CD8-positive, alpha-beta T cell (primary cell): ENCODE measurements at regions of chr1 and their contacts with region 1.

Region 1: DNA sequence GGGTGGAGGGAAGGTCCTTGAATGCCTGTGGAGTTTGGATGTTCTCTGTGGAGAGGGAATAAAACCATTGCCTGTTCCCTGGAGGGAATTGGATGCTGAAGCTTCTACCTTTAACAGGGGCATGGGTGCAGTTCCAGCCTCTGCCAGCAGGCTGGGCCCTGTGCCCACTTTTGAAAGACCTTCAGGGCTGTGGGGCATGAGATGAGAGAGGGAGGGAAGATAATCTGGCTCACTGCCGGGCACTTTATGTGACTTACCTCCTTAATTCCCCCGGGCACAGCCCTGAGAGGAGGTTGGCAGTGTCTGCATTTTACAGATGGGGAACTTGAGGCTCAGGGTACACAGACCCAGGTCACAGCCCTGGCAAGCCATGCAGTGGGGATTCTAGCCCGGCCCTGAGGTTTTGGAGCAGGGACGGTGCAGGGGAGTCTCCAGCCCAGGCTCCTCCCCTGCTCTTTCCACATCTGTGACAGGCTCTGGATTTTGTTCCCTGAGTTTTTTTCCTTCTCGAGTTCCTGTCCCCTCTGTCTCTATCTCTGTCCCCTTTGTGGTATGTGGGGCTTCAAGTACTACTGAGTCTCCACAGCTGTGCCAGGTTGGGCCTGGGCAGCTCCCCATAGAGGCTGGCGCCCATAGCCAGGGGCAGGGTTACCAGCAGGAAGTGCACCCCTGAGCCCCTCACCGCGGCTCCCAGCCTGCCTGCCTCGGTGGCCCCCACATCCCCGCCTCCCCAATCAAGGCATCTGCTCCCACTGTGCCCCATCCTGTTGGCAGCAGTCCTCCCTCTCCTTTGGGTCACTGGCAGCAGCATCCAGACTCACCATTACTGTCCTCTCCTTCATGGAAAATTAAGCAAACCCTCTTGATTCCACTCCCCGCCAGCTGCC is 14.0 kb upstream of the THEMIS2 start:
- DNase-seq: peak; percentile 71 to 91 (median 85)
- ATAC-seq: peak; percentile 100
- H3K4me3 ChIP-seq: no peak overlapping the region
- H3K4me3 Mint-ChIP-seq: no peak overlapping the region
- H3K27ac ChIP-seq: no peak overlapping the region
- H3K27ac Mint-ChIP-seq: no peak overlapping the region
- H3K4me1 ChIP-seq: peaks cover 11% of the 10 kb centered on the region
- H3K4me1 Mint-ChIP-seq: peaks cover 17% of the 10 kb centered on the region
- H3K27me3 ChIP-seq: no peaks in the 10 kb centered on the region
- H3K27me3 Mint-ChIP-seq: no peaks in the 10 kb centered on the region
- CTCF ChIP-seq: peak; percentile 100

Region 2: DNA sequence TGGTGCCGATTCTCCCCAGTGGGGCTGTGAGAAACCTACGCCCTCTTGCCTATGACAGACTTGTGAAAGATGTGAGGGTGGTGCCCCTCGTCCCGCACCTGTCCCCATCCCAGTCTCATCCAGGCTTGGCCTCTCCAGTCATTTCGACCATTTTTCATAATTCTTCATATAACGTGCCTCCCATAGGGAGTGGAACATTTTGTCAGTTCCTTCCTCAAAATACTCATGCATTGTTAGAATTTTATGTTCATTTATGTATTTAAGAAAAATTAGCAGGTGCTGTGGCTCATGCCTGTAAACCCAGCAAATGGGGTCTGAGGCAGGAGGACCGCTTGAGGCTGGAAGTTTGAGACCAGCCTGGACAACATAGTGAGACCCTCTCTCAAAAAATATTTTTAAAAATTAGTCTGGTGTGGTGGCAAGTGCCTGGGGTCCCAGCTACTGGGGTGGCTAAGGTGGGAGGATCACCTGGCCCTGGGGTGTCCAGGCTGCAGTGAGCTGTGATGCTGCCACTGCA is 56.8 kb after region 1 on chr1:
- CTCF ChIA-PET with region 1: interaction called, 16 read pairs
- POLR2A ChIA-PET with region 1: no interaction called
- intact Hi-C with region 1: no loop called
- DNase-seq: no peak
- ATAC-seq: no peak
- H3K4me3 ChIP-seq: peak overlapping the region; percentile 1 to 90
- H3K4me3 Mint-ChIP-seq: peak overlapping the region; percentile 94
- H3K27ac ChIP-seq: peak overlapping the region; percentile 81 to 92
- H3K27ac Mint-ChIP-seq: peak overlapping the region; percentile 96
- H3K4me1 ChIP-seq: peaks cover 4% of the 10 kb centered on the region
- H3K4me1 Mint-ChIP-seq: peaks cover 21% of the 10 kb centered on the region
- H3K27me3 ChIP-seq: no peaks in the 10 kb centered on the region
- H3K27me3 Mint-ChIP-seq: no peaks in the 10 kb centered on the region
- CTCF ChIP-seq: no peak

Region 3: GRCh38 chr1:27973771-27974416 is 115.6 kb after region 1 on chr1:
- CTCF ChIA-PET with region 1: interaction called, 65 read pairs
- POLR2A ChIA-PET with region 1: no interaction called
- intact Hi-C with region 1: loop called (anchors 1 to 2 kb)
- DNase-seq: no peak
- ATAC-seq: no peak
- H3K4me3 ChIP-seq: no peak overlapping the region
- H3K4me3 Mint-ChIP-seq: no peak overlapping the region
- H3K27ac ChIP-seq: no peak overlapping the region
- H3K27ac Mint-ChIP-seq: peak overlapping the region; percentile 17
- H3K4me1 ChIP-seq: no peaks in the 10 kb centered on the region
- H3K4me1 Mint-ChIP-seq: peaks cover 6% of the 10 kb centered on the region
- H3K27me3 ChIP-seq: no peaks in the 10 kb centered on the region
- H3K27me3 Mint-ChIP-seq: no peaks in the 10 kb centered on the region
- CTCF ChIP-seq: no peak

Region 4: DNA sequence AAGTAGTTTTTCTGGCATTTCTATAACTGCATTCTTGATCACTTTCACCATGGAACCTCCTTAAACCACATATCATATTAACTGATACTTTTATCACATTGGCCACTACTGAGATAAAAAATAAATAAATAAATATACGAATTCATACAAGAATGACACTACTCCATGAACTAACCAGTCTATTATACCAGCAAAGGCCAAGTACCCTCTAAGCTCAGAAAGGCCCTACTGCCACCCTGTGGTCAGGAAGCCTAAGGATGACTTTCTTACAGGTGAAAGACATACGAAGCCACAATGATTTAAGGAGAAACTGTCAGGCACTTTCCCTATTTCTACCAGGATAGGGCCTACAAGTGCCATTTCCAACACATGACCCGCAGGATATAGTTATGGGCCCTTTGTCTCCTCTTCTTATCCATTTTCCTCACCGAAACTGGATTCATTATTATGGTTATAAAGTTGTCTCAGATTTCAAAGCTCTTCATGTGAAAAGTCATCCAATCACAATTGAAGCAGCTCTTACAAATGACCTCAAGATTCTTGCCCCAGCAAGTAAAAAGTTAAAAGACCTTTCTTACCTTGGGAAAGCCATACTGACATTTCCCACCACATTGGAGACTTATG is 350.6 kb after region 1 on chr1:
- CTCF ChIA-PET with region 1: interaction called, 4 read pairs
- POLR2A ChIA-PET with region 1: no interaction called
- intact Hi-C with region 1: loop called (anchors 1 to 2 kb)
- DNase-seq: peak; percentile 19 to 81 (median 62)
- ATAC-seq: peak; percentile 95
- H3K4me3 ChIP-seq: no peak overlapping the region
- H3K4me3 Mint-ChIP-seq: no peak overlapping the region
- H3K27ac ChIP-seq: no peak overlapping the region
- H3K27ac Mint-ChIP-seq: no peak overlapping the region
- H3K4me1 ChIP-seq: no peaks in the 10 kb centered on the region
- H3K4me1 Mint-ChIP-seq: peaks cover 8% of the 10 kb centered on the region
- H3K27me3 ChIP-seq: no peaks in the 10 kb centered on the region
- H3K27me3 Mint-ChIP-seq: no peaks in the 10 kb centered on the region
- CTCF ChIP-seq: peak; percentile 69

Region 5: GRCh38 chr1:28735959-28736449 is 877.7 kb after region 1 on chr1:
- CTCF ChIA-PET with region 1: no interaction called
- POLR2A ChIA-PET with region 1: no interaction called
- intact Hi-C with region 1: no loop called
- DNase-seq: no peak
- ATAC-seq: no peak
- H3K4me3 ChIP-seq: peak overlapping the region; percentile 45 to 54
- H3K4me3 Mint-ChIP-seq: peak overlapping the region; percentile 97
- H3K27ac ChIP-seq: peak overlapping the region; percentile 83 to 84
- H3K27ac Mint-ChIP-seq: peak overlapping the region; percentile 96
- H3K4me1 ChIP-seq: peaks cover 36% of the 10 kb centered on the region
- H3K4me1 Mint-ChIP-seq: peaks cover 29% of the 10 kb centered on the region
- H3K27me3 ChIP-seq: no peaks in the 10 kb centered on the region
- H3K27me3 Mint-ChIP-seq: no peaks in the 10 kb centered on the region
- CTCF ChIP-seq: no peak